ENCODE measurements at regions of chr14 and their contacts with region 1.

Region 1: GRCh38 chr14:63478010-63478409 is 65.2 kb downstream of the PPP2R5E start:
- DNase-seq: peak; percentile 86
- H3K4me3 Mint-ChIP-seq: peak overlapping the region; percentile 42
- H3K27ac Mint-ChIP-seq: peak overlapping the region; percentile 79
- H3K4me1 Mint-ChIP-seq: peaks cover 43% of the 10 kb centered on the region
- H3K27me3 Mint-ChIP-seq: no peaks in the 10 kb centered on the region

Region 2: DNA sequence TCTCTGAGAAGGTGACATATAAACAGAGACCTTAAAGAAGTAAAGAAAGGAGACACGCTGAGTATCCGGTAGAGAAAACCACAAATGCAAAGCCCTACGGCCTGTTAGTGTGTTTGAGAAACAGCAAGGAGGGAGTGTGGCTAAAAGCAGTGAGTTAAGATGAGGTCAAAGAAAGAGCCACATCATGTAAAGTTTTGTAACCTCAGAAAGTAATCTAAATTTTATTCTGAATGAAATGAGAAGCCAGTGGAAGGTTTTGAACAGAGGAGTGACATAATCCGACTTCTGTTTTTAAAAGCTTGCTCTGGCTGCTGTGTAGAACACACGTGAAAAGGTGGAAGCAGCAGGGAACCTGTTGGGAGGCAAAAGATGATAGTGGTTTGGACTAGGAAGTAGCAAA is 32.5 kb after region 1 on chr14:
- intact Hi-C with region 1: loop called (anchors 5 kb)
- DNase-seq: peak; percentile 74
- H3K4me3 Mint-ChIP-seq: peak overlapping the region; percentile 8
- H3K27ac Mint-ChIP-seq: peak overlapping the region; percentile 64
- H3K4me1 Mint-ChIP-seq: peaks cover 50% of the 10 kb centered on the region
- H3K27me3 Mint-ChIP-seq: no peaks in the 10 kb centered on the region

Region 3: GRCh38 chr14:63650256-63650952 is 172.4 kb after region 1 on chr14:
- intact Hi-C with region 1: no loop called
- DNase-seq: peak; percentile 79
- H3K4me3 Mint-ChIP-seq: peak overlapping the region; percentile 46
- H3K27ac Mint-ChIP-seq: peak overlapping the region; percentile 90
- H3K4me1 Mint-ChIP-seq: peaks cover 19% of the 10 kb centered on the region
- H3K27me3 Mint-ChIP-seq: no peaks in the 10 kb centered on the region

Region 4: GRCh38 chr14:63863004-63863403 is 385.0 kb after region 1 on chr14:
- intact Hi-C with region 1: loop called (anchors 5 kb)
- DNase-seq: no peak
- H3K4me3 Mint-ChIP-seq: peak overlapping the region; percentile 40
- H3K27ac Mint-ChIP-seq: peak overlapping the region; percentile 78
- H3K4me1 Mint-ChIP-seq: peaks cover 41% of the 10 kb centered on the region
- H3K27me3 Mint-ChIP-seq: peaks cover 1% of the 10 kb centered on the region